ENCODE measurements at regions of chr4 and their contacts with region 1.

Region 1: GRCh38 chr4:26410385-26411293 is 79.6 kb downstream of the CCKAR start:
- DNase-seq: peak in 1 of 10 donors; percentile 18
- H3K4me3 ChIP-seq: no peak overlapping the region
- H3K27ac ChIP-seq: peak overlapping the region in 51 of 59 donors; percentile 2 to 82 (median 47)
- H3K27me3 ChIP-seq: no peaks in the 10 kb centered on the region
- CTCF ChIP-seq: peak; percentile 62 to 98 (median 82)

Region 2: DNA sequence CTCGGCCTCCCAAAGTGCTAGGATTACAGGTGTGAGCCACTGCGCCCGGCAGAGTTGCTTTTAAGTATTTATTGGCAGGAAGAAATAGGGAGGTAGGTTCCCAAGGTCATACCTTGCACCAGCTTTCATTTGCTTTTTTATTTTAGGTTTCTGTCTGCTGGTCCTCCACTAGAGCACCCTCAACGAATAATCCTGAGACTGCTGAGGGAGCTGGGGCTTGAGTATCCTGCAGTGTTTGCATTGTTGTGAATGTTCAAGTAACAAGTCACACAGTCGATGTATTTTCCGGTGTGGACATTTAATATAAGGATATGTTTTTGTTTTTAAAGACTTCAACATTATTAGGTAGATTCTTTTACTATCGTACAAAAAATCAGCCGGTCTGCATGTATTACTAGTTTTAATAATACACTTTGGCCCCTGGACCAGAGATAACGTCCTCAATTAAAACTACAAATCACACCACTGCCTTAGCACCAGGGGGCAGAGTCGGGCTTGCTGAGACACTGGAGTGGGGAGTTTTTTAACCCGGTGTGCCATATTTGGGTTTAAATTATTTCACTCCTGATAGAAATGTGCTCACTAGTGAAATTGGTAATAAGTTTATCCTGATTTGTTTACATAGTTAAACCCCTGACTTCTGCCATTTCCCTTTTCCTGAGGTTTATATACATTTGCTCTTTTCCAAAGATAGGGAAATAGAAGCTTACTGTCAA is 485.0 kb before region 1 on chr4:
- intact Hi-C with region 1: loop called in 1 of 2 experiments (anchors 10 kb)
- DNase-seq: peak in 8 of 10 donors; percentile 40 to 70 (median 56)
- H3K4me3 ChIP-seq: peak overlapping the region in 7 of 59 donors; percentile 1 to 26 (median 16)
- H3K27ac ChIP-seq: peak overlapping the region in 28 of 59 donors; percentile 12 to 86 (median 46)
- H3K27me3 ChIP-seq: no peaks in the 10 kb centered on the region
- CTCF ChIP-seq: peak; percentile 15 to 78 (median 67)

Region 3: DNA sequence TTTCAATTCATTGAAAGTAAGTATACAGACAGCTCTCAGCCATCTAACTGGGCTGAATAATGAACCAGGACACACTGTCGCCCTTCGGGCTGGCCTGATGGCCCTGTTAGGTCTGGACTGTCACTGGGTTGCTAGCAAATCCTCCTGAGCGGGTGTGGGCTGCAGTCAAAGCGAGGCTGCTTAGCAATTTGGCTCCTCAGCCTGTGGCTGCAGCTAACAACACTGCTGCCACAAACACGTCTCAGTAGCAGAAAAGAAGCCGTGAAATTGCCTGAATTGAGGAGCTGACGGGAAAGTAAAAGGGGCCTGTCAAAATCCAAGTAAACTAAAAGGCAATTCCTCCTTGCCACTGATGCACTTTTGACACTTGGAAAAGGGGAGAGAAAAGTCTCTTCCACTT is 423.8 kb before region 1 on chr4:
- intact Hi-C with region 1: loop called (anchors 5 kb)
- DNase-seq: no peak
- H3K4me3 ChIP-seq: peak overlapping the region in 3 of 59 donors; percentile 5 to 20 (median 20)
- H3K27ac ChIP-seq: peak overlapping the region in 6 of 59 donors; percentile 8 to 49 (median 41)
- H3K27me3 ChIP-seq: no peaks in the 10 kb centered on the region
- CTCF ChIP-seq: no peak

Region 4: DNA sequence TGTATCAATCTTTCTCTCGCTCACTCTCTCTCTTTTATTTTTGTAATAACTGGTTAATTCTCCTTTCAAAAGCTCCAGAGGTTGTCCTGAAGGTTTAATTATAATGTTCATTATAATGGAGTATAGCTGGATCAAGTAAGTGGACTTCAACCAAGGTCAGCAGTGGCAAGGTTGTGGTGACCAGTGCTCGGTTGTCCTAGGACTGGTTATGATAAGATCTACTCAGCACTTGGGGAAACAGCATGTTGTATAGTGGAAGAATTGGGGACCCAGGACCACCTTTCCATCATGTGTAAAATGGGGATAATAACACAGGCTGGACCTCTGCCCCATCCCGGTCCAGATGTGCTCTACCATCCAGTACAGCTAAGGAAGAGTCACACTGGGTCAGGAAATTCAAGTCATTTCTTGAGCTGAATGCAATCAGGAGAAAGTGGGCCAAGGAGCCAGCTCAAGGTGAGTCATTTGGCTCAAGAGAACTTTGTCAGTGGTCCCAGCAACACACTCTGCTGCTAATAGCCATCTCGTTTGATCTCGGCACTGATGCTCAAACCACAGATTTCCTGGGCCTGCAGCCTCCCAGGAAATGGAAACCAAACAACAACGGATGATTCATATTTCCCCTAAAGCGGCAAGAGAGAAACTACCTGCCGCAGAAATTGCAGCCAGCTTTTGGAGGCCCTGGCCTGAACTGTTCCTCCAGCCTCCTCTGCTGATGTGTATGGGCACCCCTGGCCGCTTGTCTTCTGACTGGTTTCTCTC is 213.4 kb before region 1 on chr4:
- intact Hi-C with region 1: loop called in 1 of 2 experiments (anchors 10 kb)
- DNase-seq: no peak
- H3K4me3 ChIP-seq: no peak overlapping the region
- H3K27ac ChIP-seq: no peak overlapping the region
- H3K27me3 ChIP-seq: peaks cover 0 to 4% (median 0%) of the 10 kb centered on the region in 45 donors
- CTCF ChIP-seq: no peak

Region 5: DNA sequence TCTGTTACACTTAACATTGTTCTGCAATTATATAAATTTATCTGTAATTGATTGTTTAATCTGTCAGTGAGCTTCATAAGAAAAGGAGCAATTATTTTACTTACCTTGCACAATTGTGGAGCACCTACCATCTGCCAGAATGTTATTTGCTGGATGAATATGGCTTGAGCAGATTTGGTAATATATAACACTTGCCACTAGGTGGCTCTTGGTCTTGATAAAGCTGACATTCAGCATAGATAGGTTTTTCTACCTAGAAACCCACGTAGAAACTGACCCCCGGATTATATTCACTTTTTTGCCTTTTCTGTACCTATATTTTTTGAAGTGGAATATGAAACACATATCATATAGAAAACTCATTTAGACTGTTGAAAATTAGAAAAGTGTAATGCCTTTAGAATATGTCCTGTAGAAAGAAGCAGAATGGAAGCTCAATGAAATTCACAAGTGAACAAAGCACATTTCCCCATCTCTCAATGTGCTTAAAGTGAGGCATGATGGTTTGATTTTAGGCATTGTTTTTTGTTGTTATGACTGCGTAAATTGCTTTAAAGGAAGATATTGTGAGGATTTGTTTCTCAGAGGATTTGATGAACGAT is 80.4 kb before region 1 on chr4:
- intact Hi-C with region 1: loop called in 1 of 2 experiments (anchors 2 kb)
- DNase-seq: peak in 1 of 10 donors; percentile 21
- H3K4me3 ChIP-seq: peak overlapping the region in 40 of 59 donors; percentile 0 to 59 (median 30)
- H3K27ac ChIP-seq: peak overlapping the region in 53 of 59 donors; percentile 0 to 87 (median 70)
- H3K27me3 ChIP-seq: no peaks in the 10 kb centered on the region
- CTCF ChIP-seq: peak; percentile 70 to 95 (median 84)

Measured in dorsolateral prefrontal cortex (tissue), 120 donors.